GM13977 (cell line): ENCODE measurements at regions of chr1 and their contacts with region 1.

Region 1: DNA sequence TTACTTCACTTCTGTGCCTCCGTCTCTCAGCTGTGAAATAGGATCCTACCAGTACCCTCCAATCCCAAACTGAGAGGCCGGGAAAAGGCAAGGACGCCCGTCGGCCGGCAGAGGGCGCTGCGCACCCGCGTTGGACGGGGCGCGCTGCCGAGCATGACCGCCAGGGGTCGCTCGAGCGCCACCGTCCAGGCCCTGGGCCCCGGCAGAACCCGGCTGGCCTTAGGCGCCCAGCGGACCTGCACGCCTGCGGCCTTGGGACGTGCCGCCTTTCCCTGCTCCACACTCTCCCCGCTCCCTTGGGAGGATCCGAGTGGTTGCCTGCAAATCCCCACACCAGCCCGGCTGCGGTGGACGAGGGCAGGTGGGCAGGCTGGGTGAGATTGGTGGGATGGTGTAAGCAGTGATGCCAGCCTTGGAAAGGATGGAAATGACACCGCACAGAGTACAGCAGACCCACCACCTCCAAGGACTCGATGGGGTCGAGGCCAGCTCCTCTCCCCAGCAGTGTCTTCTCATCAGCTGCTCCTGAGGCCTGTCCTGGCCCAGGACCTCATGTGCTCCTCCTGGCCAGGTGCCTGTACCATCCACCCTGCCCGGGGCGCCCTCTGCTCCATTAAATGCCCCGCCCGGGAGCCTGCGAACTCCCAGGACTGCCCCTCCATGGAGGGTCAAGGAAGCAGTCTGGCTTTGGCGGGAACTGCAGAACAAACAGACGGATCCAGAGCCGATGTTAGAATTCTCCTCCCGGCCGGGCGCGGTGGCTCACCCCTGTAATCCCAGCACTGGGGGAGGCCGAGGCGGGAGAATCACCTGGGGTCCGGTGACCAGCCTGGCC is 47.4 kb upstream of the LBR start:
- DNase-seq: peak; percentile 87
- CTCF ChIP-seq: peak; percentile 100

Region 2: GRCh38 chr1:225137981-225138380 is 337.2 kb before region 1 on chr1:
- in situ Hi-C with region 1: no loop called
- DNase-seq: no peak
- CTCF ChIP-seq: no peak

Region 3: GRCh38 chr1:225987491-225988316 is 512.5 kb after region 1 on chr1:
- in situ Hi-C with region 1: loop called (anchors 10 kb)
- DNase-seq: no peak
- CTCF ChIP-seq: peak; percentile 69